SK-N-SH (cell line): ENCODE measurements at regions of chr7 and their contacts with region 1.

Region 1: GRCh38 chr7:149147072-149147751 is at the start of gene ZNF398:
- DNase-seq: peak; percentile 99
- H3K4me3 ChIP-seq: peak within 1 kb of the TSS; percentile 64 to 95
- H3K27ac ChIP-seq: peak within 1 kb of the TSS; percentile 77 to 84
- H3K4me1 ChIP-seq: no peaks in the 10 kb centered on the region; a peak in 2 of 4 replicates
- H3K27me3 ChIP-seq: no peaks in the 10 kb centered on the region
- CTCF ChIP-seq: peak; percentile 73
- EP300 ChIP-seq: no peak; a peak in 1 of 4 replicates
- RAD21 ChIP-seq: peak; percentile 25; the same call in 1 of the 2 replicates
- polyA plus RNA-seq, gene ZNF398: 4.5 and 4.7 TPM in 2 replicates

Region 2: DNA sequence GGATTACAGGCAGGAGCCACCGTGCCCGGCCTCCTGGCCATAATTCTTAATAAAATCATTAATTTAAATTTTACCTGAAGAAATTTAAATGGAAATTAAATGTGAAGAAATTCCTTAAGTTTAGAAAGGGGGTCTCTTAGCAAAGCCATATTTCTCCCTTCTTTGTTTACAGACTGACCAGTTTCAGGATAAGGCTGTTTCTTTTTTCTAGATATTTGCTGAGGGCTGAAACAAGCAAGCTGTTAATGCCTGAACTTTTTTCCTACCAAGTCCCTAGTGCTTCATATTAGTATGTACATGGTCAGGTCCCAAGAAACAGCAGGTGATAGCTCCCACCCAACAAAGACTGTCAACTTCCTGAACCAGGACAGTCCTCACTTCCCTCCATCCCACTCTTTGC is 100.8 kb before region 1 on chr7:
- CTCF ChIA-PET with region 1: no interaction called
- POLR2A ChIA-PET with region 1: no interaction called
- DNase-seq: no peak
- H3K4me3 ChIP-seq: no peak overlapping the region
- H3K27ac ChIP-seq: no peak overlapping the region
- H3K4me1 ChIP-seq: no peaks in the 10 kb centered on the region
- H3K27me3 ChIP-seq: no peaks in the 10 kb centered on the region
- CTCF ChIP-seq: no peak
- EP300 ChIP-seq: no peak
- RAD21 ChIP-seq: no peak

Region 3: GRCh38 chr7:149071641-149072437 is 75.4 kb before region 1 on chr7:
- CTCF ChIA-PET with region 1: interaction called, 16 read pairs
- POLR2A ChIA-PET with region 1: no interaction called
- DNase-seq: peak; percentile 61
- H3K4me3 ChIP-seq: no peak overlapping the region
- H3K27ac ChIP-seq: no peak overlapping the region
- H3K4me1 ChIP-seq: no peaks in the 10 kb centered on the region
- H3K27me3 ChIP-seq: no peaks in the 10 kb centered on the region
- CTCF ChIP-seq: no peak
- EP300 ChIP-seq: no peak
- RAD21 ChIP-seq: 0 out of 2 replicates have a peak, but pooled peaks have one; percentile 39

Region 4: GRCh38 chr7:149133028-149133705 is 14.0 kb before region 1 on chr7:
- CTCF ChIA-PET with region 1: interaction called, 73 read pairs
- POLR2A ChIA-PET with region 1: interaction called, 7 read pairs
- DNase-seq: no peak
- H3K4me3 ChIP-seq: no peak overlapping the region
- H3K27ac ChIP-seq: no peak overlapping the region
- H3K4me1 ChIP-seq: peaks cover under 1 to 3% of the 10 kb centered on the region in 2 experiments; a peak in 2 of 4 replicates
- H3K27me3 ChIP-seq: no peaks in the 10 kb centered on the region
- CTCF ChIP-seq: no peak
- EP300 ChIP-seq: no peak
- RAD21 ChIP-seq: no peak

Region 5: GRCh38 chr7:149171892-149172533 is 24.8 kb after region 1 on chr7:
- CTCF ChIA-PET with region 1: interaction called, 24 read pairs
- POLR2A ChIA-PET with region 1: interaction called, 4 read pairs
- DNase-seq: no peak
- H3K4me3 ChIP-seq: no peak overlapping the region
- H3K27ac ChIP-seq: no peak overlapping the region
- H3K4me1 ChIP-seq: peaks cover 0 to 13% of the 10 kb centered on the region in 2 experiments; a peak in 2 of 4 replicates
- H3K27me3 ChIP-seq: no peaks in the 10 kb centered on the region
- CTCF ChIP-seq: no peak
- EP300 ChIP-seq: no peak
- RAD21 ChIP-seq: no peak

Region 6: GRCh38 chr7:149188637-149189259 is 41.5 kb after region 1 on chr7:
- CTCF ChIA-PET with region 1: interaction called, 83 read pairs
- POLR2A ChIA-PET with region 1: interaction called, 4 read pairs
- DNase-seq: peak; percentile 48
- H3K4me3 ChIP-seq: no peak overlapping the region
- H3K27ac ChIP-seq: peak overlapping the region in 1 of 2 experiments; percentile 23; a peak in 2 of 4 replicates
- H3K4me1 ChIP-seq: peaks cover 0 to 7% of the 10 kb centered on the region in 2 experiments; a peak in 1 of 4 replicates
- H3K27me3 ChIP-seq: no peaks in the 10 kb centered on the region; the same call in 1 of the 2 replicates
- CTCF ChIP-seq: no peak
- EP300 ChIP-seq: no peak
- RAD21 ChIP-seq: no peak